Sigmoid colon (tissue), 7 donors: ENCODE measurements at regions of chr9 and their contacts with region 1.

Region 1: GRCh38 chr9:93453047-93453914 is at the start of gene FAM120AOS:
- DNase-seq: peak; percentile 96
- H3K4me3 ChIP-seq: peak within 1 kb of the TSS; percentile 67 to 96 (median 84)
- H3K27ac ChIP-seq: peak within 1 kb of the TSS; percentile 93 to 100 (median 98)
- H3K4me1 ChIP-seq: peaks cover 0 to 56% (median 44%) of the 10 kb centered on the region in 4 donors
- H3K27me3 ChIP-seq: no peaks in the 10 kb centered on the region
- CTCF ChIP-seq: no peak
- EP300 ChIP-seq: no peak
- POLR2A ChIP-seq: peak; percentile 51 to 81
- total RNA-seq, gene FAM120AOS: 53.5 to 64.9 (median 61.6) TPM

Region 2: GRCh38 chr9:93051680-93052089 is 401.6 kb before region 1 on chr9:
- intact Hi-C with region 1: no loop called
- DNase-seq: peak; percentile 84
- H3K4me3 ChIP-seq: no peak overlapping the region
- H3K27ac ChIP-seq: peak overlapping the region; percentile 38 to 56 (median 44)
- H3K4me1 ChIP-seq: peaks cover 0 to 7% (median 3%) of the 10 kb centered on the region in 4 donors
- H3K27me3 ChIP-seq: no peaks in the 10 kb centered on the region
- CTCF ChIP-seq: no peak
- EP300 ChIP-seq: no peak
- POLR2A ChIP-seq: no peak

Region 3: GRCh38 chr9:93095205-93096130 is 357.8 kb before region 1 on chr9:
- intact Hi-C with region 1: loop called (anchors 5 kb)
- DNase-seq: peak; percentile 100
- H3K4me3 ChIP-seq: peak overlapping the region; percentile 36 to 100 (median 92)
- H3K27ac ChIP-seq: peak overlapping the region; percentile 94 to 99 (median 98)
- H3K4me1 ChIP-seq: peaks cover 0 to 56% (median 48%) of the 10 kb centered on the region in 4 donors
- H3K27me3 ChIP-seq: no peaks in the 10 kb centered on the region
- CTCF ChIP-seq: no peak
- EP300 ChIP-seq: no peak
- POLR2A ChIP-seq: peak; percentile 65 to 76

Region 4: DNA sequence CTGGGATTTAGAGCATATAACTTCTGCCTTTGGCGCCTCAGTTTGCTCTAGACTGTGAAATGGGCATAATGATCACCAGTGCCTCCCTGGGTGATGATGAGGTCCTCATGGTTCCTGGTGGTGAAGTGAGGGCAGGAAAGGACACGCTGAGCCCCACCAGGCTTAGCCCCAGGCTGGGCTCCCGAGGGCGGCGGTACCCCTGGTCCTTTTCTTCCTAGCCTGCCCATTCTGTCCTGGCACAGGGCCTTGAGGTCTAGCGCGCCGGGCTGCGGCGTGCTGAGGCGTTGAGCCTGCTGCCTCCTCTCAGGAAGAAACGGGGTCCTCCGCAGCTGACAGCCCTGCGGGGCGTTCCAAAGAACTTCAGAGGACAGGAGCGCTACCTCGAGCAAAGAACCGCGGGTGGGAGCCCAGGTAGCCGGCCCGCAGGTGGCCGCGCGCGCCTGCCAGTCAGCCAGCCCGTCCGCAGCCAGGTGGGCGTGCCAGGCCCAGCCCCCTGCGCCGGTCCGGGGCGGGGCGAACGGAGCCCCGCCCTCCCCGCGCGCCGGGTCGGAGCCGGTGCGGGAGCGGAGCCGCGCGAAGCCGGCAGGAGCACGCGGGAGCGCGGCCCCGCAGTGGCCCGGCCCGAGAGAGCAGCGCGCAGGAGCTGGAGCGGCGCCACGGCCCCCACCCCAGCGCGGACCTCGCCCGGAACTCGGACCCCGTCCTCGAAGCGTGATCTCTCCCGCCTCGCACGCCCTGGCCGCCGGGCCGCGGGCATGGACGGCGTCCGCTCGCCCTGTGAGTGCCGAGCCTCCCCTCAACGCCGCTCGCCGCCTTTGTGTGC is 269.5 kb before region 1 on chr9 and contains the start of gene WNK2:
- intact Hi-C with region 1: loop called (anchors 10 kb)
- DNase-seq: no peak
- H3K4me3 ChIP-seq: peak within 1 kb of the TSS; percentile 43 to 87 (median 60)
- H3K27ac ChIP-seq: peak within 1 kb of the TSS; percentile 81 to 89 (median 84)
- H3K4me1 ChIP-seq: peaks cover 4 to 58% (median 55%) of the 10 kb centered on the region in 4 donors
- H3K27me3 ChIP-seq: peaks cover 0 to 6% (median 0%) of the 10 kb centered on the region in 3 donors
- CTCF ChIP-seq: no peak
- EP300 ChIP-seq: no peak
- POLR2A ChIP-seq: no peak
- total RNA-seq, gene WNK2: 16.0 to 95.8 (median 29.0) TPM

Region 5: DNA sequence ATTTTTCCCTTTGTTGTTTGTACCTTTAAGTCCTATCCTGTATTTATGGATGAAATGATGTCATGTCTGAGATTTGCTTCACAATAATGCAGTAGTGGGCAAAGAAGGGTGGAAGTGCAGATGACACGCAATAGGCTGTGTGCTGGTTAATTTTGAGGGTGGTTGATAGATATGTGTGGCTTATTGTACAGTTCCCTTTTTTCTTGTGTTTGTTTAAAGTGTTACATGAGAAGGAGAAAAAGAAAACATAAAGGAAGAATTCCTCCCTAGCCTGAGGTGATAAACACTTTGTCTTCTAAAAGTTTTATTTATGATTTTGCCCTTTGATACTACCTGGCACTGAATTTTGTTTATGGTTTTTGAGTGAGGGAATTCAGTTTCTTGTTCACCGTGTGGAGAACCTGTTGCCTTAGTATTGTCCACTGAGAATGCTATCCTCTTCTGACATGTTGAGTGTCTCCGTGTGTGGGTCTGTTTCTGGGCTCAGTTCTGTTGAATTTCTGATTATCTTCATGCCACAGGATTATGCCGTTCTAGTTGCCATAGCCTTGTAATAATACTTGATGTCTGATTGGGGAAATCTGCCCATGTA is 52.4 kb after region 1 on chr9:
- intact Hi-C with region 1: loop called (anchors 5 kb)
- DNase-seq: no peak
- H3K4me3 ChIP-seq: no peak overlapping the region
- H3K27ac ChIP-seq: peak overlapping the region in 3 of 4 donors; percentile 36 to 64 (median 50)
- H3K4me1 ChIP-seq: peaks cover 0 to 39% (median 24%) of the 10 kb centered on the region in 4 donors
- H3K27me3 ChIP-seq: no peaks in the 10 kb centered on the region
- CTCF ChIP-seq: no peak
- EP300 ChIP-seq: no peak
- POLR2A ChIP-seq: no peak

Region 6: GRCh38 chr9:93566408-93567270 is 113.4 kb after region 1 on chr9:
- intact Hi-C with region 1: loop called (anchors 1 kb)
- DNase-seq: peak; percentile 98
- H3K4me3 ChIP-seq: peak overlapping the region; percentile 47 to 57 (median 54)
- H3K27ac ChIP-seq: peak overlapping the region; percentile 88 to 95 (median 92)
- H3K4me1 ChIP-seq: peaks cover 0 to 17% (median 14%) of the 10 kb centered on the region in 4 donors
- H3K27me3 ChIP-seq: no peaks in the 10 kb centered on the region
- CTCF ChIP-seq: peak; percentile 79 to 86 (median 83)
- EP300 ChIP-seq: no peak
- POLR2A ChIP-seq: peak; percentile 90 to 92